Calu3 (cell line): ENCODE measurements at regions of chr17 and their contacts with region 1.

Region 1: GRCh38 chr17:42660692-42661345 is 1.7 kb downstream of the TUBG2 start:
- DNase-seq: no peak
- H3K4me3 Mint-ChIP-seq: peak overlapping the region; percentile 99
- H3K27ac Mint-ChIP-seq: no peak overlapping the region
- H3K4me1 Mint-ChIP-seq: peaks cover 11% of the 10 kb centered on the region
- H3K27me3 Mint-ChIP-seq: no peaks in the 10 kb centered on the region
- CTCF ChIP-seq: no peak

Region 2: DNA sequence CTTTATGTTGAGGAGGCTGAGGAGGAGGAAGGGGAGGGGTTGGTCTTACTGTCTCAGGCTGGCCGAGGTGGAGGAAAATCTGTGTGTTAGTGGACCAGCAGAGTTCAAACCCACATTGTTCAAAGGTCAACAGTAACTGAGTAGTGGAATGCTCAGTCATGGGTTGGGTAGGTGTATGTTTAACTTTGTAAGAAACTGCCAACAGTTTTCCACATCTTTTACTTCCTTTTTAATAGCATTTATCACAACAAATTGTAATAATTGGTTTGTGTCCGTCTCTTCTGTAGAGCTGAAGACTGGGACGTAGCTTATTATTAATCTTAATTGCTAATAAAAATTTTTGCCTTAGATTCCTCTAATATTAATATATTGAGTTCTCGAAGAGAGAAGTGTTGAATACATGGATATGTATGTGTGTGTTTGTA is 196.8 kb before region 1 on chr17:
- CTCF ChIA-PET with region 1: no interaction called
- intact Hi-C with region 1: no loop called
- DNase-seq: peak; percentile 44
- H3K4me3 Mint-ChIP-seq: peak overlapping the region; percentile 20
- H3K27ac Mint-ChIP-seq: peak overlapping the region; percentile 55
- H3K4me1 Mint-ChIP-seq: peaks cover 45% of the 10 kb centered on the region
- H3K27me3 Mint-ChIP-seq: no peaks in the 10 kb centered on the region
- CTCF ChIP-seq: no peak

Region 3: GRCh38 chr17:42632949-42633444 is 27.8 kb before region 1 on chr17:
- CTCF ChIA-PET with region 1: interaction called, 12 read pairs
- intact Hi-C with region 1: no loop called
- DNase-seq: no peak
- H3K4me3 Mint-ChIP-seq: no peak overlapping the region
- H3K27ac Mint-ChIP-seq: no peak overlapping the region
- H3K4me1 Mint-ChIP-seq: no peaks in the 10 kb centered on the region
- H3K27me3 Mint-ChIP-seq: no peaks in the 10 kb centered on the region
- CTCF ChIP-seq: no peak